Activated B cell treated with CpG ODN at 0.5 μM for 24 hours (primary cell): ENCODE measurements at regions of chr9 and their contacts with region 1.

Region 1: GRCh38 chr9:104968025-104968982 is 40.3 kb upstream of the ABCA1 start:
- DNase-seq: peak; percentile 91
- ATAC-seq: peak; percentile 99
- H3K4me3 Mint-ChIP-seq: peak overlapping the region; percentile 94
- H3K27ac Mint-ChIP-seq: peak overlapping the region; percentile 20
- H3K4me1 Mint-ChIP-seq: peaks cover 10% of the 10 kb centered on the region
- H3K27me3 Mint-ChIP-seq: peaks cover 15% of the 10 kb centered on the region
- CTCF ChIP-seq: no peak

Region 2: GRCh38 chr9:103978396-103978795 is 989.9 kb before region 1 on chr9:
- CTCF ChIA-PET with region 1: no interaction called
- POLR2A ChIA-PET with region 1: no interaction called
- intact Hi-C with region 1: no loop called
- DNase-seq: no peak
- ATAC-seq: no peak
- H3K4me3 Mint-ChIP-seq: no peak overlapping the region
- H3K27ac Mint-ChIP-seq: no peak overlapping the region
- H3K4me1 Mint-ChIP-seq: no peaks in the 10 kb centered on the region
- H3K27me3 Mint-ChIP-seq: no peaks in the 10 kb centered on the region
- CTCF ChIP-seq: no peak

Region 3: GRCh38 chr9:104093647-104094533 is 874.4 kb before region 1 on chr9 and contains the start of gene SMC2:
- CTCF ChIA-PET with region 1: no interaction called
- POLR2A ChIA-PET with region 1: no interaction called
- intact Hi-C with region 1: loop called (anchors 5 kb)
- DNase-seq: peak; percentile 90
- ATAC-seq: peak; percentile 97
- H3K4me3 Mint-ChIP-seq: peak within 1 kb of the TSS; percentile 99
- H3K27ac Mint-ChIP-seq: peak within 1 kb of the TSS; percentile 99
- H3K4me1 Mint-ChIP-seq: peaks cover 31% of the 10 kb centered on the region
- H3K27me3 Mint-ChIP-seq: no peaks in the 10 kb centered on the region
- CTCF ChIP-seq: no peak
- total RNA-seq, gene SMC2: 12.5 and 13.5 TPM in 2 replicates

Region 4: GRCh38 chr9:104780799-104781395 is 187.4 kb before region 1 on chr9:
- CTCF ChIA-PET with region 1: no interaction called
- POLR2A ChIA-PET with region 1: no interaction called
- intact Hi-C with region 1: loop called (anchors 5 kb)
- DNase-seq: no peak
- ATAC-seq: peak; percentile 47
- H3K4me3 Mint-ChIP-seq: no peak overlapping the region
- H3K27ac Mint-ChIP-seq: peak overlapping the region; percentile 65
- H3K4me1 Mint-ChIP-seq: peaks cover 34% of the 10 kb centered on the region
- H3K27me3 Mint-ChIP-seq: no peaks in the 10 kb centered on the region
- CTCF ChIP-seq: peak; percentile 27

Region 5: GRCh38 chr9:104882086-104882485 is 86.2 kb before region 1 on chr9:
- CTCF ChIA-PET with region 1: no interaction called
- POLR2A ChIA-PET with region 1: no interaction called
- intact Hi-C with region 1: no loop called
- DNase-seq: no peak
- ATAC-seq: no peak
- H3K4me3 Mint-ChIP-seq: no peak overlapping the region
- H3K27ac Mint-ChIP-seq: no peak overlapping the region
- H3K4me1 Mint-ChIP-seq: no peaks in the 10 kb centered on the region
- H3K27me3 Mint-ChIP-seq: no peaks in the 10 kb centered on the region
- CTCF ChIP-seq: no peak

Region 6: DNA sequence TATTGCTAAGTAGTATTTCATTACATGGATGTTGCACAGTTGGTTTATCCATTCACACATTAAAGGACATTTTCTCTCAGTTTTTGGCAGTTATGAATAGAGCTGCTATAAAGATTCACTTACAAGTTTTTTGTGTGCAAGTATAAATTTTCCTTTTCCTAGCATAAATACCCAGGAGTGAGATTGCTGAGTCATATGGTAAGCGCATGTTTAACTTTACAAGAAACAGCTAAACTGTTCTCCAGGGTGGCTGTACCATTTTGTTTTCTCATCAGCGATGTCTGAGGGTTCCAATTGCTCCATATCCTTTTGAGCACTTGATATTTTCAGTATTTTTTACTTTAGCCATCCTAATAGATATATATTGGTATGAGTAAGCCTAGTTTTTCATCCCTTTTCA is 23.9 kb before region 1 on chr9:
- CTCF ChIA-PET with region 1: no interaction called
- POLR2A ChIA-PET with region 1: no interaction called
- intact Hi-C with region 1: loop called (anchors 1 kb)
- DNase-seq: no peak
- ATAC-seq: no peak
- H3K4me3 Mint-ChIP-seq: no peak overlapping the region
- H3K27ac Mint-ChIP-seq: no peak overlapping the region
- H3K4me1 Mint-ChIP-seq: no peaks in the 10 kb centered on the region
- H3K27me3 Mint-ChIP-seq: no peaks in the 10 kb centered on the region
- CTCF ChIP-seq: no peak

Region 7: GRCh38 chr9:105087910-105088888 is 119.9 kb after region 1 on chr9:
- CTCF ChIA-PET with region 1: no interaction called
- POLR2A ChIA-PET with region 1: no interaction called
- intact Hi-C with region 1: no loop called
- DNase-seq: no peak
- ATAC-seq: no peak
- H3K4me3 Mint-ChIP-seq: no peak overlapping the region
- H3K27ac Mint-ChIP-seq: no peak overlapping the region
- H3K4me1 Mint-ChIP-seq: no peaks in the 10 kb centered on the region
- H3K27me3 Mint-ChIP-seq: peaks cover 2% of the 10 kb centered on the region
- CTCF ChIP-seq: no peak

Region 8: DNA sequence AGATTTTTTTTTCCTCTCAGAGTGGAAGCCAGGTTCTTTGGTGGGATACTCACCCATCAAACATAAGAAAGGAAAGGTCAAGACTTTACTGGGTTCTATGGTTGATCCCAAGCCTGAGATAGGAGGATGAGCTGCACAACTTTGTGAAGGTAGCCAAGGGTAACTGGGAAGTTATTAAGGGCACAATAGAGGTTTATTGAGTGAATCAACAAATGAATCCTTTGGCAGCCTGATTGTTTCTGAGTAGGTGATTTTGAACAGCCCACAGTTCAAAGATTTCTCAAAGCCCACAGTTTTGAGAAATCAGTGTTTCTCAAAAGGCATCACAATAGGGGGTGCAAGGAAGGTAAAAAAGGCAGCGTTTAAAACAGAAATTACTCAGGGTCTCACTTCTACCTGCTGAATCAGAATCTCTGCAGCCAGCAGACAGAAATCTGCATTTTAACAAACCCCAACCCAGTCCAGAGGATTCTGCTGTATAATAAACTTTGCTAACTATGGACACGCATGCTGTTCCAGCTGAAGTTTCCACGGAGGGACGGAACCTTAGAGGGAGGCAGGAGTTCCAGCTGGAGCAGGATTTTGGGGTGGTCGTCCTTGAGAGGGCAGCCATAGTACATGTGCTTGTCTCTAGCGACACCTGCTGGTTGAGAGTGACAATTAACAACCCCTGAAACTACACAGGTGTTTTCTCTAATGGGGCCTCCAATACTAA is 446.8 kb after region 1 on chr9:
- CTCF ChIA-PET with region 1: no interaction called
- POLR2A ChIA-PET with region 1: no interaction called
- intact Hi-C with region 1: loop called (anchors 10 kb)
- DNase-seq: peak; percentile 18
- ATAC-seq: peak; percentile 85
- H3K4me3 Mint-ChIP-seq: no peak overlapping the region
- H3K27ac Mint-ChIP-seq: no peak overlapping the region
- H3K4me1 Mint-ChIP-seq: peaks cover 4% of the 10 kb centered on the region
- H3K27me3 Mint-ChIP-seq: no peaks in the 10 kb centered on the region
- CTCF ChIP-seq: no peak